T-cell (primary cell): ENCODE measurements at regions of chr20 and their contacts with region 1.

Region 1: GRCh38 chr20:539848-540247 is 3.7 kb downstream of the CSNK2A1 start:
- DNase-seq: no peak
- ATAC-seq: no peak
- H3K4me3 ChIP-seq: no peak overlapping the region
- H3K4me3 Mint-ChIP-seq: peak overlapping the region in 2 of 3 donors; percentile 26 to 91
- H3K27ac ChIP-seq: no peak overlapping the region
- H3K27ac Mint-ChIP-seq: peak overlapping the region in 1 of 2 donors; percentile 44
- H3K4me1 ChIP-seq: peaks cover 16 to 30% of the 10 kb centered on the region in 2 experiments
- H3K4me1 Mint-ChIP-seq: peaks cover 91 to 100% (median 93%) of the 10 kb centered on the region in 3 donors
- H3K27me3 ChIP-seq: no peaks in the 10 kb centered on the region
- H3K27me3 Mint-ChIP-seq: no peaks in the 10 kb centered on the region

Region 2: GRCh38 chr20:400454-401275 is 139.2 kb before region 1 on chr20:
- CTCF ChIA-PET with region 1: no interaction called
- POLR2A ChIA-PET with region 1: interaction called in 1 of 2 experiments, 15 read pairs
- DNase-seq: no peak
- ATAC-seq: no peak
- H3K4me3 ChIP-seq: no peak overlapping the region
- H3K4me3 Mint-ChIP-seq: no peak overlapping the region
- H3K27ac ChIP-seq: no peak overlapping the region
- H3K27ac Mint-ChIP-seq: no peak overlapping the region
- H3K4me1 ChIP-seq: peaks cover 2 to 13% of the 10 kb centered on the region in 2 experiments
- H3K4me1 Mint-ChIP-seq: peaks cover 11 to 19% (median 18%) of the 10 kb centered on the region in 3 donors
- H3K27me3 ChIP-seq: no peaks in the 10 kb centered on the region
- H3K27me3 Mint-ChIP-seq: no peaks in the 10 kb centered on the region

Region 3: GRCh38 chr20:805713-806112 is 265.9 kb after region 1 on chr20:
- CTCF ChIA-PET with region 1: no interaction called
- POLR2A ChIA-PET with region 1: no interaction called
- DNase-seq: no peak
- ATAC-seq: no peak
- H3K4me3 ChIP-seq: no peak overlapping the region
- H3K4me3 Mint-ChIP-seq: no peak overlapping the region
- H3K27ac ChIP-seq: no peak overlapping the region
- H3K27ac Mint-ChIP-seq: no peak overlapping the region
- H3K4me1 ChIP-seq: no peaks in the 10 kb centered on the region
- H3K4me1 Mint-ChIP-seq: no peaks in the 10 kb centered on the region
- H3K27me3 ChIP-seq: peaks cover 2 to 14% of the 10 kb centered on the region in 2 experiments
- H3K27me3 Mint-ChIP-seq: peaks cover 7 to 26% of the 10 kb centered on the region in 2 donors